Activated naive CD4-positive, alpha-beta T cell treated with anti-CD3 and anti-CD28 coated beads for 36 hours (primary cell): ENCODE measurements at regions of chr4 and their contacts with region 1.

Region 1: GRCh38 chr4:56435306-56435926 is at the start of gene PPAT:
- DNase-seq: peak; percentile 99
- H3K4me3 Mint-ChIP-seq: peak within 1 kb of the TSS; percentile 98
- H3K27ac Mint-ChIP-seq: peak within 1 kb of the TSS; percentile 96
- H3K4me1 Mint-ChIP-seq: peaks cover 50% of the 10 kb centered on the region
- H3K27me3 Mint-ChIP-seq: no peaks in the 10 kb centered on the region
- total RNA-seq, gene PPAT: 35.2 to 40.6 TPM

Region 2: GRCh38 chr4:55853484-55854046 is 581.9 kb before region 1 on chr4 and contains the start of gene EXOC1:
- CTCF ChIA-PET with region 1: no interaction called
- intact Hi-C with region 1: loop called (anchors 1 kb)
- DNase-seq: peak; percentile 99
- H3K4me3 Mint-ChIP-seq: peak within 1 kb of the TSS; percentile 32
- H3K27ac Mint-ChIP-seq: peak within 1 kb of the TSS; percentile 86
- H3K4me1 Mint-ChIP-seq: peaks cover 28% of the 10 kb centered on the region
- H3K27me3 Mint-ChIP-seq: no peaks in the 10 kb centered on the region
- total RNA-seq, gene EXOC1: 18.7 to 21.9 TPM

Region 3: DNA sequence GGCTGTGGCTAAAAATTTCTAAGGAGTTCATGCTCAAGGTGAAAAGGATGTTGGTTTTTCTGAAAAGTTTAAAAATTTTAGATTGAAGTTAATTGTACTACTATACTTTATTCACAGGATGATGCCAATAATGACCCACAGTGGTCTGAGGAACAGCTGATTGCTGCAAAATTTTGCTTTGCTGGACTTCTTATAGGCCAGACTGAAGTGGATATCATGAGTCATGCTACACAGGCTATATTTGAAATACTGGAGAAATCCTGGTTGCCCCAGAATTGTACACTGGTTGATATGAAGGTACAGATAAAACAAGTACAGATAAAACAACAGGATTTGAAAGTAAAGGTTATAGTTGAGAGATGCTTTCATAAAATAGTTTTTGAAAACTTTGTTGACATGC is 12.9 kb after region 1 on chr4:
- CTCF ChIA-PET with region 1: no interaction called
- intact Hi-C with region 1: loop called (anchors 2 kb)
- DNase-seq: no peak
- H3K4me3 Mint-ChIP-seq: no peak overlapping the region
- H3K27ac Mint-ChIP-seq: no peak overlapping the region
- H3K4me1 Mint-ChIP-seq: peaks cover 29% of the 10 kb centered on the region
- H3K27me3 Mint-ChIP-seq: no peaks in the 10 kb centered on the region

Region 4: DNA sequence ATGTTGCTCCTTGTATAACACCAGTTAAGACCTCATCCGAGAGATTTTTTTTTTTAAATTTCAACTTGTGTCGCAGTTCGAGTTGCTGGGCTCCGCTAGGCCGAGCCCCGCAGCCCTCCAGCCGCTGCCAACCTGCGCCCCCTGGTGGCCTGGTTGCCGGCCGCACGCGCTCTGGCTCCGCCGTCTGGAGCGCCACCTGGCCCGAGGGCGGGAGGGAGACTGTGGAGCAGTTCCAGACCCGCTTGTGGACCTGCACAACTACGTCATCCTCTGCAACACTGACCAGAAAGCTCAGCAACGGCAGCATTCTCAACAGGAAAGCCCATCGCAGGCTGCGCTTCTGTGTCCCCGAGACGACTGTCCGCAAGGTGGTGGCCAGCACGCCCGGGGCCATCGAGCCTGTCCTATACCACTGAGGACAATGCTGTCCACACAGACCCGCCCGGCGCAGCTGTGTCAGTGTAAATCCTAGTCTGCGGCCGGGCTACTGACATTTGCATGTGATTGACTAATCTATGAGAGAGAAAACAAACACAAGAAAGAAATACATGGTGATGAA is 109.2 kb after region 1 on chr4:
- CTCF ChIA-PET with region 1: interaction called, 4 read pairs
- intact Hi-C with region 1: loop called (anchors 1 kb)
- DNase-seq: peak; percentile 86
- H3K4me3 Mint-ChIP-seq: peak overlapping the region; percentile 57
- H3K27ac Mint-ChIP-seq: no peak overlapping the region
- H3K4me1 Mint-ChIP-seq: peaks cover 14% of the 10 kb centered on the region
- H3K27me3 Mint-ChIP-seq: no peaks in the 10 kb centered on the region

Region 5: DNA sequence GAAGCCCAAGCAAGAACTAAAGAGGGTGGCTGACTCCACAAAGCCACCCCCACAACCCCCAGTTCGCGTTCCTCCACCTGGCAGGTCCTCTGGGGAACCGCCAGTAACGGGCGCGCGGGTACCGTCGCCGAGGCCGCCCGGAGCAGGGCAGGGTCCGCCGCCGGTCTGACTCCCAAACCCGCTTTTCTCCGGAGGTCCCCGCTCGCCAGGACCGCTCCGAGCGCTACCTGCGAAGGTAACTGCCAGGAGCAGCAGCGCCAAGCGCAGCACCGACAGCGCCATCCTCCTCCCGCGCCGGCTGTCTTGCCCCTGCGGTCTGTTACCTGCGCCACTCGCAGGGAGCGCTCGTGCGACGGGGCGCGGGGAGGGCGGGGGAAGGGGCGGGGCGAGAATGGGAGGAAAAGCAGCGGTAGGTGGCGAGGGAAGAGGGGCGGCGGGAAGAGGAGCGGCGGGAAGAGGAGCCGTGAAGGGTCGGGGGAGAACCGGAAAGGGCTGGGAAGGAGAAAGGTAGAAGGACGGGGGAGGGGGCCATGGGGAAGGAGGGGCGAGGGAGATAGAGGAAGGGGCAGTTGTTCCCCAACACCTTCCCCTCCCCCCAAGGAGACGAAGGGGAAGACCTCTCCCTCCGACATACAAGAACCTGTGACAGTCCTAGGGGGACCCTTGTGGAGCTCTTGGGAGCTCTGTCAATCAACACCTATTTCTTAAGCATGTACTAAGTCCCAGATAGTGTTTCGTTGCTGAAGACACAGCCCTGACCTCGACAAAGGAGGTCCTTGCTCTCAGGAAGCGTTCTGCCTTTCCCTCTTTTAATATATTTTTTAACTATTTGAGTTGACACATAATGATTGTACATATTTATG is 386.2 kb after region 1 on chr4 and contains the start of gene SPINK2:
- CTCF ChIA-PET with region 1: no interaction called
- intact Hi-C with region 1: loop called (anchors 1 kb)
- DNase-seq: peak; percentile 75
- H3K4me3 Mint-ChIP-seq: peak within 1 kb of the TSS; percentile 74
- H3K27ac Mint-ChIP-seq: no peak within 1 kb of the TSS
- H3K4me1 Mint-ChIP-seq: peaks cover 25% of the 10 kb centered on the region
- H3K27me3 Mint-ChIP-seq: peaks cover 12% of the 10 kb centered on the region
- total RNA-seq, gene SPINK2: 0.83 to 1.4 TPM

Region 6: DNA sequence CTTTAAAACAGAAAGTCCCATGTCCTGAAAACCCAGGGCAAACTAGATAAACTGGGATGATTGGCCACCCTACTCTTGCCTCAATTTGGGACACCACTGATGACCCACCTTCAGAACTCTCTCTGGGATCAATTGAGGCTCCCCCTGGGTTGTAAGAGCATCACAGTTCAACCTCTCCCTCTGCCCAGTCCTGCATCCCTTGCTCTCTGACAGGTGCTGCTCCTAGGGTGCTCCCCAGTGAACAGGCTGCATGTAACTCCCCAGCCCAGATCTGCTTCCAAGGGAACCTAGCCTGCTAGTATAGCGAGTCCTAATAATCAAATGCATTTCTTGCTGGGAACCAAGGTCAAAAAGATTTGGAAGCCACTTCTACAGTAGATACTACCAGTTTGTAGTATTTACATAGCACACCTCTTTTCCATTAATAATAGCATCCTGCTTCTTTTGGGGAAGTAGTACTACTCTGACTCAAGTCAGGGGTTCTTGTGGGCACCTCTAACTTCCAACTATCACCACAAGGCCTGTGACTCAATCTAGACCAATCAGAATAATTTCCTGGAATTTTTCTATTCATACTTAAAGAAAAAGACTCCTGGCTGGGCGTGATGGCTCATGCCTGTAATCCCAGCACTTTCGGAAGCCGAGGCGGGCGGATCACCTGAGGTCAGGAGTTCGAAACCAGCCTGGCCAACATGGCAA is 428.2 kb after region 1 on chr4:
- CTCF ChIA-PET with region 1: no interaction called
- intact Hi-C with region 1: no loop called
- DNase-seq: no peak
- H3K4me3 Mint-ChIP-seq: no peak overlapping the region
- H3K27ac Mint-ChIP-seq: no peak overlapping the region
- H3K4me1 Mint-ChIP-seq: no peaks in the 10 kb centered on the region
- H3K27me3 Mint-ChIP-seq: no peaks in the 10 kb centered on the region